Activated naive CD4-positive, alpha-beta T cell treated with anti-CD3 and anti-CD28 coated beads for 36 hours (primary cell): ENCODE measurements at regions of chr6 and their contacts with region 1.

Region 1: DNA sequence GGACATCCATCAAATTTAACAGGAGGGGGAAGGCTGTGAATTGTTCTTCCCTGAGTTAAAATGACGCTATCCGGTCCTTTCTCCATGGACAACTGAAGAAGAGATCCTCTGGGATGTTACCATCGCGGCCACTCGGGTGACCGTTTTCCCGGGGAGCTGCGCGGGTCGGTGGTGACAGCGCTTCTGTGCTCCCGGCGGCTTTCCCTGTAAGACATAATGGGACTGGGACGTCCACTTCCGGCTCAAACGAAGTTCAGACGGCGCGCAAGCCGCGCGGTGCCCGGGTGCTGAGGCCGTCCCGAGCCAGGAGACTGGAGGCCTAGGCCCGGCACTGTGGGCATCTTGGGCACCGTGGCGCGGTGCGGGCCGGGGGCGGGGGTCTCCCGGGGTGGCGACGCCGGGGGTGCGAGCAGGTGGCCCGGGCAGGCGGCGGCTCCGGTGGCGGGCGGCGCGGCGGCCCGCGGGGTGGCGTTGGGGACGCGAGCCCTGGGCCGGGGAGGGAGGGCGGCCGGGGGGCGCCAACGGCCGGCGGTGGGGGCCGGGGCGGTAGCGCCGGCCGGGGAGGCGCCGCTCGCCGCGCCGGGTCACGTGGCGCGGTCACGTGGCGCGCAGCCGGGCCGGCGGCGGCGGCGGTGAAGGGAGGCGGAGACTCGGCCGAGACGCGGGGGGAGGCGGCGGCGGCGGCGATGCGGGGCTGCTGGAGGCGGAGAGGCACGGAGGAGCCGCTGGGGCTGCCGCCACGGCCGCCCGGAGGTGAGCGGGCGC is 63.6 kb downstream of the GTF2H5 start:
- DNase-seq: peak; percentile 65
- H3K4me3 Mint-ChIP-seq: peak overlapping the region; percentile 89
- H3K27ac Mint-ChIP-seq: peak overlapping the region; percentile 76
- H3K4me1 Mint-ChIP-seq: peaks cover 24% of the 10 kb centered on the region
- H3K27me3 Mint-ChIP-seq: no peaks in the 10 kb centered on the region

Region 2: GRCh38 chr6:157962601-157963302 is 269.0 kb before region 1 on chr6:
- CTCF ChIA-PET with region 1: no interaction called
- intact Hi-C with region 1: no loop called
- DNase-seq: peak; percentile 55
- H3K4me3 Mint-ChIP-seq: peak overlapping the region; percentile 65
- H3K27ac Mint-ChIP-seq: peak overlapping the region; percentile 89
- H3K4me1 Mint-ChIP-seq: peaks cover 21% of the 10 kb centered on the region
- H3K27me3 Mint-ChIP-seq: no peaks in the 10 kb centered on the region

Region 3: DNA sequence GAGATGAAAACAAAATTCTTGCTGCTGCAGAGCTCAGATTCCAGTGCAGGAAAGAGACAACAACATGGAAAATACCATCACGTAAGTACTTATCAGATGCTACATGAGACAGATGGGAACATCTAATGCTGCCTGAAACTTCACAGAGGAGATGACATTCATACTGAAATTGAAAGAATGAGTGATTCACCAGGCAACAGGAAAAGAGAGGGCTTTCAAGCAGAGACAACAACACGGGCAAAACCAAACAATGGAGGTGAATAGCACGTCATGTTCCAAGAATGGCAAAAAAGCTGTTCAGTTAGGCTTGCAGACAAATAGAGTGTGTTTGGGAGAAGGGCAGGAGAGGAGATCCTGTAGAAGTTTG is 24.3 kb before region 1 on chr6:
- CTCF ChIA-PET with region 1: interaction called, 3 read pairs
- intact Hi-C with region 1: loop called (anchors 1 kb)
- DNase-seq: peak; percentile 66
- H3K4me3 Mint-ChIP-seq: peak overlapping the region; percentile 5
- H3K27ac Mint-ChIP-seq: peak overlapping the region; percentile 78
- H3K4me1 Mint-ChIP-seq: peaks cover 34% of the 10 kb centered on the region
- H3K27me3 Mint-ChIP-seq: no peaks in the 10 kb centered on the region

Region 4: DNA sequence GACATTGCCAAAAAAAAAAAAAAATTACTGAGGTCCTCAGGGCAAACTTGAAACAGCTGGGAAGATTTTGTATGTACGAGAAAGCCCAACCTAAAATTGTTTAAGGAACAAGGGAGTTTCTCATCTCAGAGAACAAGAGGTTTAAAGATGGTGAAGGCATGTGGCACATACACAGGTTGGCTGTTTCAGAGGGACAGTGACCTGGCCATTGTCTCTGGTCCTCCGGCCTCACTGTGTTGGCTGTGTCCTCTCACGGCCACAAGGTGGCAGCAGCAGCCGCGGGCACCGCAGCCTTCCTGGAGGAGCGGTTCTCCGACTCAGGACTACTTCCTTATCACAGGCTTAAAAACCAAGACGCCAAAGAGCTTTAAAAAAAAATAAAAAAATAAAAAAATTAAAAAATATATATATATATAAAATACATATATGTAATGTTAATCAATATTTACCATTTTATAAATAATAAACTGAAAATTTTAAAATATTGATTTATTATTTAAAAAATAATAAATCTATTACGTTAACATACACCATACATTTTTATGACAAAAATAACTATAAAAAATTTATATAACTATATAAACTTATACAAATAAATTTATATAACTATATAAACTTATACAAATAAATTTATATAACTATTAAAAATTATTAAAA is 10.8 kb before region 1 on chr6:
- CTCF ChIA-PET with region 1: interaction called, 13 read pairs
- intact Hi-C with region 1: no loop called
- DNase-seq: peak; percentile 83
- H3K4me3 Mint-ChIP-seq: no peak overlapping the region
- H3K27ac Mint-ChIP-seq: no peak overlapping the region
- H3K4me1 Mint-ChIP-seq: no peaks in the 10 kb centered on the region
- H3K27me3 Mint-ChIP-seq: no peaks in the 10 kb centered on the region

Region 5: GRCh38 chr6:158270389-158271127 is 38.8 kb after region 1 on chr6:
- CTCF ChIA-PET with region 1: no interaction called
- intact Hi-C with region 1: loop called (anchors 5 kb)
- DNase-seq: peak; percentile 50
- H3K4me3 Mint-ChIP-seq: peak overlapping the region; percentile 32
- H3K27ac Mint-ChIP-seq: no peak overlapping the region
- H3K4me1 Mint-ChIP-seq: peaks cover 30% of the 10 kb centered on the region
- H3K27me3 Mint-ChIP-seq: no peaks in the 10 kb centered on the region

Region 6: DNA sequence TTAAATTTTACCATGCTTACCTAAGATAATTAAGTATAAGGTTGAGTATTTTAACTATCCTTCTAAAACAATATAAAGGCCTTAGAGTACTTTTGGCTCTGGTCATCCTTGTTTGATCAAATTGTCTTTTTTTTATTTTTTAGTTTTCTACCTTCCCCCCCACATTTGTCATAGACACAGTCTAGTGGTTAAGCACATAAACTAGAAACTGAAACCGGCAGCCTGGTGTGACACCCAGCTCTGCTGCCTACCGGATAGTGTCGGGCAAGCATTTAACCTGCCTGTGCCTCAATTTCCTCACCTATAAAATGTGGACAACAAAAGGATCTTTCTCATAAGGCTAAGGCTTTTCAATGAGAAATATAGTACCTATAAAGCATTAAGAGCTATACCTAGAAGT is 58.9 kb after region 1 on chr6:
- CTCF ChIA-PET with region 1: no interaction called
- intact Hi-C with region 1: loop called (anchors 1 kb)
- DNase-seq: peak; percentile 82
- H3K4me3 Mint-ChIP-seq: peak overlapping the region; percentile 7
- H3K27ac Mint-ChIP-seq: peak overlapping the region; percentile 53
- H3K4me1 Mint-ChIP-seq: peaks cover 26% of the 10 kb centered on the region
- H3K27me3 Mint-ChIP-seq: no peaks in the 10 kb centered on the region

Region 7: GRCh38 chr6:158559895-158560835 is 328.4 kb after region 1 on chr6 and contains the start of gene TMEM181:
- CTCF ChIA-PET with region 1: no interaction called
- intact Hi-C with region 1: loop called (anchors 2 kb)
- DNase-seq: peak; percentile 90
- H3K4me3 Mint-ChIP-seq: peak within 1 kb of the TSS; percentile 93
- H3K27ac Mint-ChIP-seq: peak within 1 kb of the TSS; percentile 84
- H3K4me1 Mint-ChIP-seq: peaks cover 35% of the 10 kb centered on the region
- H3K27me3 Mint-ChIP-seq: no peaks in the 10 kb centered on the region
- total RNA-seq, gene TMEM181: 8.3 to 8.6 TPM

Region 8: GRCh38 chr6:158644231-158645063 is 412.7 kb after region 1 on chr6 and contains the start of gene DYNLT1:
- CTCF ChIA-PET with region 1: interaction called, 3 read pairs
- intact Hi-C with region 1: loop called (anchors 5 kb)
- DNase-seq: peak; percentile 91
- H3K4me3 Mint-ChIP-seq: peak within 1 kb of the TSS; percentile 97
- H3K27ac Mint-ChIP-seq: peak within 1 kb of the TSS; percentile 99
- H3K4me1 Mint-ChIP-seq: peaks cover 76% of the 10 kb centered on the region
- H3K27me3 Mint-ChIP-seq: no peaks in the 10 kb centered on the region
- total RNA-seq, gene DYNLT1: 99.1 to 107 TPM

Region 9: DNA sequence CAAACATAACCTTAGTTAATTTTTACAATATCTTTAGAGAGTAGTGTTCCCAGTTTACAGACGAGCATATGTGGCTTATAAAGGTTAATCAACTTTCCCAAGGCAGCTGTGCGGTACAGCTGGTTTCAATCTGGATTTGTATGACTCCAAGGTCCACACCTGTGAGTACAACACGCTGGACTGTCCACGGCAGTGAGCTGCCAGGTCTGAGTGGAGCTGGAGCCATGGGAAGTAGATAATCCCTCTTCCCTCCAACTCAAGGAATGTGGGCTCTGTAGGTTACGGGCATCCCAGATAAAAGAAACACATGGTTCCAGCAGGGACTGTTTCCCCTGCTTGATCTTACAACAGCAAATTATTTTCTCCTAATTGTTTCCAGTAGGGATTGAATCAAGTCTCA is 1359.1 kb after region 1 on chr6:
- CTCF ChIA-PET with region 1: no interaction called
- intact Hi-C with region 1: no loop called
- DNase-seq: no peak
- H3K4me3 Mint-ChIP-seq: no peak overlapping the region
- H3K27ac Mint-ChIP-seq: no peak overlapping the region
- H3K4me1 Mint-ChIP-seq: peaks cover 13% of the 10 kb centered on the region
- H3K27me3 Mint-ChIP-seq: no peaks in the 10 kb centered on the region